T-cell (primary cell): ENCODE measurements at regions of chr19 and their contacts with region 1.

Region 1: DNA sequence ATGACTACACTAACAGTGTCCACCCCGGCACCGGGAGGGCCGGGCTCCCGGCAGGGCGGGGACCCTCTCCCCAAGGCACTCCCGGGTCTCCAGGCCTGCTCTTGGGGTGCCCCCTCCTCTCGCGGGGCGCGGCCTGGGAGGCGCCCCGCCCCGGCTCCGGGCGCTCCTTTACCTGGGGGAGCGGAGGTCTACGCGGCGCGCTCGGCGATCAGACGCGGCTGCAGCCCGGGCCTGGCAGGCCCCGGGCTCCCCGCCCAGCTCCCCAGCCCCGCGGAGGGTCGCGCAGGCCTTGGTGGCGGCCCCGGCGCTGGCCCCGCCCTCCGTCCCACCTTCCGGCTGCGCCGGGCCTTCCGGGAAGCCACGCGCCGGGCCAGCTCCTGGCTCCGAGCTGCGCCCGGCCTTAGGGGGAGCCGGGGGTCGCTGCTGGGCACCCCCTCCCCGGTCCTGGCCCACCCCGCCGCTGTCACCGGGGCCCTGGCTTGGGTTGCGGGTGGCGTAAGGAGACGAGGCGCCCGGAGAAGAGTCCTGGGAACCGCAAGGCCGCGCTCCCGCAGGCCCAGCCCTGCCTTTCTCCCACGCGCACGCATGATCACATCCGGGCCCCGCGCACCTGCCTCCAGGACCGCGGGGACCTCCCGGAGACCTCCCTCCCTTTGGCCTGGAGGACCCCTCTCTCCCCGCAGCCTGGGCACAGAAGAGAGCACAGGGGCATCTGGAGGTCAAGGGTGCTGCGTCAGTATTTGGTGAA is at the start of gene C19orf12:
- DNase-seq: peak in 28 of 35 experiments; percentile 15 to 76 (median 42)
- ATAC-seq: peak; percentile 61 to 68 (median 64)
- H3K4me3 ChIP-seq: peak within 1 kb of the TSS; percentile 63 to 71
- H3K4me3 Mint-ChIP-seq: peak within 1 kb of the TSS; percentile 85 to 89 (median 85)
- H3K27ac ChIP-seq: peak within 1 kb of the TSS; percentile 90
- H3K27ac Mint-ChIP-seq: peak within 1 kb of the TSS; percentile 97
- H3K4me1 ChIP-seq: peaks cover 32 to 62% of the 10 kb centered on the region in 2 experiments
- H3K4me1 Mint-ChIP-seq: peaks cover 57 to 61% (median 58%) of the 10 kb centered on the region in 3 donors
- H3K27me3 ChIP-seq: peaks cover 0 to 1% of the 10 kb centered on the region in 2 experiments
- H3K27me3 Mint-ChIP-seq: no peaks in the 10 kb centered on the region
- total RNA-seq, gene C19orf12: 25.1 to 38.7 (median 34.2) TPM

Region 2: DNA sequence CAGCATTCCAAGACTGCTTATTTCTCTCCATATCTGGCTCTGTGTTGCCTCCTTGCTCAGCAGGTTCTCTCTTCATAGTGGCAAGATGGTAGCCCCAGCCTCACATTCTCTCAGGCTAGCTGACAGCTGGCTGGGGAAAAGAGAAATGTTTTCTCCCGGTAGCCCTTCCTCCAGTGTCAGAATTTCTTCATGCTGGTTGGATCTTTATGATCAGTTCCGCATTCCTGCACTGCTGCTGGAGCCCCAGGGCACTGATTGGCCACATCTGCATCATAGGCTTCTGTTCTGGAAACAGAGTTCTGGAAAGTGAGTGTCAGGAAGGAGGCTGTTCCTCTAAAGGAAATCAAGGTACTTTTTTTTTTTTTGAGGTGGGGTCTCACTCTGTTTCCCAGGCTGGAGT is 84.5 kb before region 1 on chr19:
- CTCF ChIA-PET with region 1: no interaction called
- POLR2A ChIA-PET with region 1: no interaction called
- DNase-seq: no peak
- ATAC-seq: no peak
- H3K4me3 ChIP-seq: no peak overlapping the region
- H3K4me3 Mint-ChIP-seq: no peak overlapping the region
- H3K27ac ChIP-seq: no peak overlapping the region
- H3K27ac Mint-ChIP-seq: no peak overlapping the region
- H3K4me1 ChIP-seq: peaks cover 0 to 3% of the 10 kb centered on the region in 2 experiments
- H3K4me1 Mint-ChIP-seq: no peaks in the 10 kb centered on the region
- H3K27me3 ChIP-seq: peaks cover 0 to 5% of the 10 kb centered on the region in 2 experiments
- H3K27me3 Mint-ChIP-seq: no peaks in the 10 kb centered on the region

Region 3: DNA sequence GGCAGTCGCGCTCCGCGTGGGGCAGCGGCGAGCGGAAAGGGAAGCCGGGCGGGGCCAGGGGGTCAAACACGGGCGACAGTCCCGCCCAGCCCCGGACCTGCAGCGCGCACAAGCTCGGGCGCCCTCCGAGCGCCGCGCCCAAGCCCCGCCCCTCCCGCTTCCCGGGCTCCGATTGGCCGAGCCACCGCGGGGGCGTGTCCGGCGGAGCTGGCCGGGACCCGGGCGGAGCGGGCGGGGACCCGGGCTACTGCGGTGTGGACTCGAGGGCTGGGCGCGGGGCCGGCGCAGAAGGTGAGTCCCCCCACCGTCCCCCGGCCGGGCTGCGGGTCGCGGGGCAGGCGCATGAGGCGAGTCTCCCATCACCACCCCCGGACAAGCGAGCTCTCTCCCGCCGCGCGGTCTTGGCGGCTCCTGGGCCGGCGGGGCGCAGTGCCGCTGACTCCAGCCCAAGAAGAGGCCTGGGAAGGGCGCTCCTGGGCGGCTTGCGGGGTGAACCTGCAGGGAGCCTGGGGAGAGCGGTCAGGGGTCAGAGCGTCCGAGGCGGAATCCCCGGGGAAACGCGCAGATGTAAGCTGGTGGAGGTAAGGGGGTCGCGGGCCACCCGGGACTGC is 49.8 kb before region 1 on chr19 and contains the start of gene PLEKHF1:
- CTCF ChIA-PET with region 1: interaction called, 12 to 15 read pairs
- POLR2A ChIA-PET with region 1: interaction called, 3 read pairs
- DNase-seq: peak; percentile 36 to 87 (median 63)
- ATAC-seq: peak; percentile 77 to 80 (median 78)
- H3K4me3 ChIP-seq: peak within 1 kb of the TSS; percentile 90 to 98
- H3K4me3 Mint-ChIP-seq: peak within 1 kb of the TSS; percentile 88 to 93 (median 89)
- H3K27ac ChIP-seq: peak within 1 kb of the TSS; percentile 97
- H3K27ac Mint-ChIP-seq: peak within 1 kb of the TSS; percentile 95 to 97
- H3K4me1 ChIP-seq: peaks cover 39 to 70% of the 10 kb centered on the region in 2 experiments
- H3K4me1 Mint-ChIP-seq: peaks cover 60 to 71% (median 67%) of the 10 kb centered on the region in 3 donors
- H3K27me3 ChIP-seq: no peaks in the 10 kb centered on the region
- H3K27me3 Mint-ChIP-seq: no peaks in the 10 kb centered on the region
- total RNA-seq, gene PLEKHF1: 13.2 to 42.6 (median 34.5) TPM

Region 4: GRCh38 chr19:29671393-29672160 is 43.5 kb before region 1 on chr19:
- CTCF ChIA-PET with region 1: interaction called, 15 to 25 read pairs
- POLR2A ChIA-PET with region 1: interaction called, 3 to 5 read pairs
- DNase-seq: peak; percentile 72 to 91 (median 84)
- ATAC-seq: peak; percentile 50 to 71 (median 70)
- H3K4me3 ChIP-seq: peak overlapping the region; percentile 12 to 39
- H3K4me3 Mint-ChIP-seq: peak overlapping the region; percentile 58 to 89 (median 62)
- H3K27ac ChIP-seq: peak overlapping the region; percentile 97
- H3K27ac Mint-ChIP-seq: peak overlapping the region; percentile 95 to 97
- H3K4me1 ChIP-seq: peaks cover 70 to 100% of the 10 kb centered on the region in 2 experiments
- H3K4me1 Mint-ChIP-seq: peaks cover 82 to 96% (median 93%) of the 10 kb centered on the region in 3 donors
- H3K27me3 ChIP-seq: no peaks in the 10 kb centered on the region
- H3K27me3 Mint-ChIP-seq: no peaks in the 10 kb centered on the region

Region 5: DNA sequence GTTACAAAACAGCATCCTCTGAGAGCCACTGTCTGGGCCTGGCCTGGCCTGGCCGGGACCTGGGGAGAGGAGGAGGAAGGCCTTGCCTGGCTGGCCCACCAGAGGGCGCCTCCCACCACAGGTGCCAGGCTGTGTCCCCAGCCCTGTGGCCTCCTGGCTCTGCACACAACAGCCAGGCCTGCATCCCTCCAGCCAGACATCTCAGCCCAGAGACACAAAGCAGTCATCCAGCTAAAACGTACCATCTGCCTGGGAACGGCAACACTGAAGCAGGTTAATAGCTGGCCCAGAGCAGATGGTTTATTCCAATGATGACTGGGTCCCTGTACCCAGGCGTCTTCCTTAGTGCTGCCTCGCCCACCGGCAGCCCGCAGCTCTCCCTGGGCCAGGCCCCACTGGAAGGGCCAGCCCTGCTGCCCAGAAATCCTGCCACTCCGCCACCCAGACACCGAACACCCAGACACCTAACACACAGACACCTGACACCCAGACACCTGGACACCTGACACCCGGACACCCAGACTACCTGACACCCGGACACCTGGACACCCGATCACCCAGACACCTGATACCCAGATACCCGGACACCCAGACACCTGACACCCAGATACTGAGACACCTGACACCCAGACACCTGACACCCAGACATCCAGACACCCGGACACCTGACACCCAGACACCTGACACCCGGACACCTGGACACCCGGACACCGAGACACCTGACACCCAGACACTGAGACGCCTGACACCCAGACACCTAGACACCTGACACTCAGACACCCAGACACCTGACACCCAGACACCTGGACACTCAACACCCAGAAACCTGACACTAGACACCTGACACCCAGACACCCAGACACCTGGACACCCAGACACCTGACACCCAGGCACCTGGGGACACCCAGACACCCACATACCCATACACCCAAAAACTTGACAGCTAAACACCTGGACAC is 20.2 kb before region 1 on chr19:
- CTCF ChIA-PET with region 1: interaction called, 35 to 46 read pairs
- POLR2A ChIA-PET with region 1: interaction called in 1 of 2 experiments, 7 read pairs
- DNase-seq: peak; percentile 45 to 90 (median 78)
- ATAC-seq: peak; percentile 96 to 97 (median 97)
- H3K4me3 ChIP-seq: no peak overlapping the region
- H3K4me3 Mint-ChIP-seq: peak overlapping the region in 1 of 3 donors; percentile 23
- H3K27ac ChIP-seq: no peak overlapping the region
- H3K27ac Mint-ChIP-seq: peak overlapping the region; percentile 47 to 58
- H3K4me1 ChIP-seq: peaks cover 0 to 32% of the 10 kb centered on the region in 2 experiments
- H3K4me1 Mint-ChIP-seq: peaks cover 13 to 30% (median 25%) of the 10 kb centered on the region in 3 donors
- H3K27me3 ChIP-seq: no peaks in the 10 kb centered on the region
- H3K27me3 Mint-ChIP-seq: no peaks in the 10 kb centered on the region